Astrocyte of the cerebellum (primary cell): ENCODE measurements at regions of chr20 and their contacts with region 1.

Region 1: DNA sequence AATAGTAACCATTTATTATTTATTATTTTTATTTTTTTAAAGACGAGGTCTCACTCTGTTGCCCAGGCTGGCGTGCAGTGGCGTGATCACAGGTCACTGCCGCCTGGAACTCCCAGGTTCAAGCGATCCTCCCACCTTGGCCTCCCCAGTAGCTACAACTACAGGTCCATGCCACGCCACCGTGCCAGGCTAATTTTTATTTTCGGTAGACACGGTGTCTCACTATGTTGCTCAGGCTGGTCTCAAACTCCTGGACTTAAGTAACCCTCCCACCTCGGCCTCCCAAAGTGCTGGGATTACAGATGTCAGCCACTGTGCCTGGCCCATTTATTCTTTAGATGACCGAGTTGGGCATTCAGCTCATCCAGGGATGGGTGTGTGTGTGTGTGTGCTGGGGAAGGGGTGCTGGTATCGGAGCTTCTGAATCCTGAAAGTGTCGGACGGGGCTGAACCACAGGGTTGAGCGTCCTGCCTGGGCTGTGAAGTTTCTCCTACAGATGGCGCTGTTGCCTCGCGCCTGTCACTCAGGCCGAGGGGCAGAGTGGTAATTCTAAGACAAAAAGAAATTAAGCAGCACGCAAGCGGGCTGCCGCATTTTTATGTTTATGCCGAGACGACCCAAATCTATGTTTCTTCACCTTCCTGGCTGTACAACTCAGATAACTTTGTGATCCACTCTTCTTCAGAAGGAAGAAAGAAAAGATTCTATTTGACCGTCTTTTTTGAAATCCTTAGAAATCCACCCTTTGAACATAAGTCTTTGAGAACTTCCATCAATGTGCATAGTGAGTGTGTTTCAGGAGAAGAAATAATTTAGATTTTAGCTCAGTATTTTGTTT is 252.8 kb downstream of the CDH26 start:
- DNase-seq: peak; percentile 27
- H3K4me3 ChIP-seq: no peak overlapping the region
- CTCF ChIP-seq: peak; percentile 96

Region 2: DNA sequence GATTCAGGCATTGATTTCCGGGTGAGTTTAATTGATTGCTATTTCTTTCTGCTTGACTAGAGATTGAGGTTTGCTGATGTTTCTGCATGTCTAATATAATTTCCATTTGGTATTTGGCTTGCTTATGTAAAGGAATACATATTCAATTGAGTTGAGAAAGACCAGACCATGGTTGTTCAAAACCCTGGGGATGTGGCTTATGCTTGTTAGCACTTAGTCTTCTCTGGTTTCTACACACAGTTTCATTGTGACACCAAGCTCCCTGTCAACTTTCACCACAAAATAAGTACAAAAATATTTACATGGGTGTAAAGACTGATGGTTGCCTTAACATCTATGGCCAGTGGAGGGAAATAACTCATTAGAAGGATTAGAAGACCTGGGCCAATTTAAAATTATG is 43.2 kb before region 1 on chr20:
- in situ Hi-C with region 1: no loop called
- DNase-seq: no peak
- H3K4me3 ChIP-seq: no peak overlapping the region
- CTCF ChIP-seq: no peak

Region 3: DNA sequence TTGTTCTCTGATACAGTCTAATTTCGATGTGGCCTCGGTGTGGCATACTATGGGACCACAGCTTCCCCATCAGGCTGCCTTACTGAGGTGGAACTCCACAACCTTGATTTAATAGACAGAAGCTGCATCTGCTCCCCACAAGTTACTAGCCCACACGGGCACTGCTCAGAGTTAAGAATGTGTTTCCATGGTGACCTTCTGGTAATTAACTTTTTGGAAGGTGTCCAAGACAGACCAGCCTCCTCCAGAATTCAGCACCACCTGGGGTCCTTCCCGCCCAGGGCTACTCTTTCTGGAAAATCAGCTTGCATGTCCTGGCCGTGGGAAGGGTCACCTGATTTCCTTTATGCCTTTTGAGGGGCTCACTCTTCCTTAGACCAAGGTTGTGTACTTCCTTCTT is 992.3 kb after region 1 on chr20:
- in situ Hi-C with region 1: no loop called
- DNase-seq: no peak
- H3K4me3 ChIP-seq: no peak overlapping the region
- CTCF ChIP-seq: no peak

Region 4: DNA sequence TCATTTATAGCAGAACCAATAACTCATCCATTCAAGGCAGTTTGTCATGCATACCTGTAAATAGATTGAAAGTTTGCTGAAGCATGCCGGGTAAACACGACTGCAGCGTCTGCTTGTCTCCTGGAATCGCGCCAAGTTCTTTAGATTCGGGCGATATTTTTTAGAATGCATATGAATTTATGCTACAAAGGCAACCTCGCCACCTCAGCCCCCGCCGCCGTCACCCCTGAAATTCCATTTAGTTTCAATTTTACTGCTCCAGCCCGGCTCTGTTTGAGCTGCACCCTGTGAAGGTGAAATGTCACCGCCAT is 1023.8 kb after region 1 on chr20:
- in situ Hi-C with region 1: loop called (anchors 25 kb)
- DNase-seq: no peak
- H3K4me3 ChIP-seq: no peak overlapping the region
- CTCF ChIP-seq: no peak